IMR-90 (cell line): ENCODE measurements at regions of chr1 and their contacts with region 1.

Region 1: GRCh38 chr1:171984850-171985485 is 143.7 kb downstream of the DNM3 start:
- DNase-seq: peak; percentile 49
- ATAC-seq: peak; percentile 71; the same call in 1 of the 2 replicates
- H3K4me3 ChIP-seq: no peak overlapping the region
- H3K27ac ChIP-seq: no peak overlapping the region
- H3K4me1 ChIP-seq: no peaks in the 10 kb centered on the region
- H3K27me3 ChIP-seq: no peaks in the 10 kb centered on the region
- CTCF ChIP-seq: peak; percentile 73
- POLR2A ChIP-seq: no peak
- RAD21 ChIP-seq: peak; percentile 75

Region 2: GRCh38 chr1:171485375-171486047 is 499.5 kb before region 1 on chr1 and contains the start of gene PRRC2C:
- CTCF ChIA-PET with region 1: no interaction called
- POLR2A ChIA-PET with region 1: no interaction called
- dilution Hi-C with region 1: no loop called
- in situ Hi-C with region 1: no loop called
- intact Hi-C with region 1: loop called (anchors 5 kb)
- DNase-seq: peak; percentile 98
- ATAC-seq: peak; percentile 97
- H3K4me3 ChIP-seq: peak within 1 kb of the TSS; percentile 87
- H3K27ac ChIP-seq: peak within 1 kb of the TSS; percentile 91
- H3K4me1 ChIP-seq: peaks cover 2% of the 10 kb centered on the region; the same call in 1 of the 2 replicates
- H3K27me3 ChIP-seq: no peaks in the 10 kb centered on the region
- CTCF ChIP-seq: peak; percentile 95
- POLR2A ChIP-seq: peak; percentile 87
- RAD21 ChIP-seq: peak; percentile 79
- total RNA-seq, gene PRRC2C: 58.3 and 66.4 TPM in 2 replicates

Region 3: DNA sequence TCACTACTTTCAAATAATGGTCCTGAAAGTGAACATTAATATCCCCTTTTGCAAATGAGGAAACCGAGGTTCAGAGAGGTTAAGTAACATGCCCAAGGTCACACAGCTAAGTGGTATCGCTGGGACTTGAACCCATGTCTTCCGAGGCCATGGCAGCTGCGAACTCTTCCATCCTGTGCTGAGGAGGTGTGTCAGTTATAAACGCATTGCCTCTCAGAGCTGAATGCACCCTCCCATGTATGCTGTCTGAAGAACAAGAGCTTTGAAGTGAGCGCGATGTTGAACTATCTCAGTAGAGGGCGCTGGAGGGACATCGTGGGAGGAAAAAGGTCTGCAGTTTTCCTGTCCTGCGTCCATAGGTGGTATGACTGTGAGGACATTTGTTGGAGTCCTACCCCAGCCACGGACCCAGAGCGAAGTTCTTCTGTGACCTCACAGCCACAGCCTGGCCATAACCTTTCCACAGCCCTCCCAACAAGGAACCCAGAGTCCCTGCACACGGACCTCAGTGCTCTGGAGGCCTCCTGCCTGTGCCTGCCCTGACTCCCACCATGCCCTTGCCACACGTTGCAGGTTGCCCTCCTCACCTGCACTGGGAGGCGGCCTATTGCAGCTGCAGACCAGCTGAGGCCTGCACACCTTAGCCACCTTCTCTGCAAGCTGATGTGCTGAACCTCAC is 340.0 kb before region 1 on chr1:
- CTCF ChIA-PET with region 1: interaction called, 19 read pairs
- POLR2A ChIA-PET with region 1: no interaction called
- dilution Hi-C with region 1: no loop called
- in situ Hi-C with region 1: loop called (anchors 10 kb)
- intact Hi-C with region 1: loop called (anchors 1 kb)
- DNase-seq: peak; percentile 82
- ATAC-seq: peak; percentile 97
- H3K4me3 ChIP-seq: no peak overlapping the region
- H3K27ac ChIP-seq: no peak overlapping the region
- H3K4me1 ChIP-seq: no peaks in the 10 kb centered on the region
- H3K27me3 ChIP-seq: peaks cover 6% of the 10 kb centered on the region; the same call in 1 of the 2 replicates
- CTCF ChIP-seq: peak; percentile 88
- POLR2A ChIP-seq: no peak
- RAD21 ChIP-seq: peak; percentile 84

Region 4: DNA sequence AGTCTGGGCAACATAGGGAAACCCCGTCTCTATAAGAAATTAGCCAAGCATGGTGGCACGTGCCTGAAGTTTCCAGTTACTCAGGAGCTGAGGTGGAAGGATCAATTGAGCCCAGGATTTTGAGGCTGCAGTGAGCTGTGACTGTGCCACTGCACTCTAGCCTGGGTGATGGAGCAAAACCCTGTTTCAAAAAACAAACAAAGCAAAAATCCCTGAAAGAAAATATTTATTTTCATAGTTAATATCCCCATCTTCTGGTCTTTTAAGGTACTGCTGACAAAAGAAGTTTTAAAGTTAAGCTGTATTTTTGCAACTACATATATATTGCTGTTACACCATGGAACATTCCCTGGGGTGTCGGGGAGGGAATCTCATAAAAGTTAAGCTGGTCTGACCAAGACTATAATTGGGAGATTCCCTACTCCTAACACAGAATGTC is 269.1 kb before region 1 on chr1:
- CTCF ChIA-PET with region 1: interaction called, 3 read pairs
- POLR2A ChIA-PET with region 1: no interaction called
- dilution Hi-C with region 1: no loop called
- in situ Hi-C with region 1: no loop called
- intact Hi-C with region 1: loop called (anchors 5 kb)
- DNase-seq: peak; percentile 27
- ATAC-seq: peak; percentile 62
- H3K4me3 ChIP-seq: no peak overlapping the region
- H3K27ac ChIP-seq: 0 out of 2 replicates have a peak overlapping the region, but pooled peaks have one; percentile 15
- H3K4me1 ChIP-seq: peaks cover 8% of the 10 kb centered on the region
- H3K27me3 ChIP-seq: no peaks in the 10 kb centered on the region
- CTCF ChIP-seq: peak; percentile 47
- POLR2A ChIP-seq: no peak
- RAD21 ChIP-seq: peak; percentile 28; the same call in 1 of the 2 replicates

Region 5: GRCh38 chr1:171741872-171742576 is 242.9 kb before region 1 on chr1 and contains the start of gene VAMP4:
- CTCF ChIA-PET with region 1: interaction called, 3 read pairs
- POLR2A ChIA-PET with region 1: no interaction called
- dilution Hi-C with region 1: no loop called
- in situ Hi-C with region 1: no loop called
- intact Hi-C with region 1: loop called (anchors 5 kb)
- DNase-seq: peak; percentile 76
- ATAC-seq: peak; percentile 86
- H3K4me3 ChIP-seq: peak within 1 kb of the TSS; percentile 92
- H3K27ac ChIP-seq: peak within 1 kb of the TSS; percentile 98
- H3K4me1 ChIP-seq: peaks cover 8% of the 10 kb centered on the region; the same call in 1 of the 2 replicates
- H3K27me3 ChIP-seq: no peaks in the 10 kb centered on the region
- CTCF ChIP-seq: no peak
- POLR2A ChIP-seq: peak; percentile 78
- RAD21 ChIP-seq: no peak
- total RNA-seq, gene VAMP4: 3.4 and 7.5 TPM in 2 replicates

Region 6: DNA sequence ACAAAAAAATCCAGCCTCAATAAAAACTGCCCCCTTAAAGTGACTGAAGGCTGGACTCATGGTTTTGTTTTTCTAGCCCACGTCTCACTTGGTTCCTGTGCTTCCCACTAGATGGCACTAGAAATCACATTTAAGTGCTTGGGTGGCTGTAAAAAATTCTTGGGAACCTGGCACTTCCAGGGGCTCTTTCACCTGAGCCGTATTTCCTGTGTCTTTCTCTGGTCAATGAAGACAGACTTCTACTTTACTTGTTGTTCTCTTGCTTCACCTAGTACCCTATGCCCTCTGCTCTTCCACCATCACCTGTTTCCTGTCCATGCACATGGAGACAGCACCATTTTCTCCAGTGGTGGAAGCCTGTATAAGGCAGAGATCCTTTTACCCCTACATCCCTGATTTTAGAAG is 183.5 kb before region 1 on chr1:
- CTCF ChIA-PET with region 1: interaction called, 138 read pairs
- POLR2A ChIA-PET with region 1: interaction called, 3 read pairs
- dilution Hi-C with region 1: no loop called
- in situ Hi-C with region 1: loop called (anchors 5 kb)
- intact Hi-C with region 1: loop called (anchors 1 kb)
- DNase-seq: peak; percentile 51
- ATAC-seq: peak; percentile 65
- H3K4me3 ChIP-seq: no peak overlapping the region
- H3K27ac ChIP-seq: no peak overlapping the region
- H3K4me1 ChIP-seq: peaks cover 4% of the 10 kb centered on the region; the same call in 1 of the 2 replicates
- H3K27me3 ChIP-seq: no peaks in the 10 kb centered on the region
- CTCF ChIP-seq: peak; percentile 71
- POLR2A ChIP-seq: no peak
- RAD21 ChIP-seq: peak; percentile 71

Region 7: GRCh38 chr1:171913385-171913784 is 71.6 kb before region 1 on chr1:
- CTCF ChIA-PET with region 1: no interaction called
- POLR2A ChIA-PET with region 1: no interaction called
- dilution Hi-C with region 1: no loop called
- in situ Hi-C with region 1: no loop called
- intact Hi-C with region 1: no loop called
- DNase-seq: no peak
- ATAC-seq: no peak
- H3K4me3 ChIP-seq: no peak overlapping the region
- H3K27ac ChIP-seq: no peak overlapping the region
- H3K4me1 ChIP-seq: no peaks in the 10 kb centered on the region
- H3K27me3 ChIP-seq: no peaks in the 10 kb centered on the region; the same call in 1 of the 2 replicates
- CTCF ChIP-seq: no peak
- POLR2A ChIP-seq: no peak
- RAD21 ChIP-seq: no peak

Region 8: GRCh38 chr1:172246521-172247390 is 261.8 kb after region 1 on chr1:
- CTCF ChIA-PET with region 1: no interaction called
- POLR2A ChIA-PET with region 1: no interaction called
- dilution Hi-C with region 1: no loop called
- in situ Hi-C with region 1: no loop called
- intact Hi-C with region 1: no loop called
- DNase-seq: no peak
- ATAC-seq: no peak
- H3K4me3 ChIP-seq: no peak overlapping the region
- H3K27ac ChIP-seq: no peak overlapping the region
- H3K4me1 ChIP-seq: no peaks in the 10 kb centered on the region
- H3K27me3 ChIP-seq: no peaks in the 10 kb centered on the region
- CTCF ChIP-seq: no peak
- POLR2A ChIP-seq: no peak
- RAD21 ChIP-seq: no peak